Natural killer cell (primary cell): ENCODE measurements at regions of chr3 and their contacts with region 1.

Region 1: GRCh38 chr3:191388823-191389222 is 58.5 kb upstream of the UTS2B start:
- DNase-seq: no peak
- ATAC-seq: no peak
- H3K4me3 ChIP-seq: no peak overlapping the region
- H3K4me3 Mint-ChIP-seq: no peak overlapping the region
- H3K27ac ChIP-seq: no peak overlapping the region
- H3K27ac Mint-ChIP-seq: no peak overlapping the region
- H3K4me1 ChIP-seq: no peaks in the 10 kb centered on the region
- H3K4me1 Mint-ChIP-seq: no peaks in the 10 kb centered on the region
- H3K27me3 ChIP-seq: no peaks in the 10 kb centered on the region
- H3K27me3 Mint-ChIP-seq: no peaks in the 10 kb centered on the region
- CTCF ChIP-seq: no peak

Region 2: GRCh38 chr3:190614226-190615059 is 774.4 kb before region 1 on chr3:
- intact Hi-C with region 1: no loop called
- DNase-seq: no peak
- ATAC-seq: no peak
- H3K4me3 ChIP-seq: no peak overlapping the region
- H3K4me3 Mint-ChIP-seq: no peak overlapping the region
- H3K27ac ChIP-seq: no peak overlapping the region
- H3K27ac Mint-ChIP-seq: no peak overlapping the region
- H3K4me1 ChIP-seq: peaks cover 2% of the 10 kb centered on the region
- H3K4me1 Mint-ChIP-seq: peaks cover 0 to 10% of the 10 kb centered on the region in 2 donors
- H3K27me3 ChIP-seq: no peaks in the 10 kb centered on the region
- H3K27me3 Mint-ChIP-seq: no peaks in the 10 kb centered on the region
- CTCF ChIP-seq: no peak

Region 3: GRCh38 chr3:191119415-191120295 is 269.2 kb before region 1 on chr3:
- intact Hi-C with region 1: no loop called
- DNase-seq: no peak
- ATAC-seq: no peak
- H3K4me3 ChIP-seq: no peak overlapping the region
- H3K4me3 Mint-ChIP-seq: no peak overlapping the region
- H3K27ac ChIP-seq: no peak overlapping the region
- H3K27ac Mint-ChIP-seq: no peak overlapping the region
- H3K4me1 ChIP-seq: no peaks in the 10 kb centered on the region
- H3K4me1 Mint-ChIP-seq: no peaks in the 10 kb centered on the region
- H3K27me3 ChIP-seq: no peaks in the 10 kb centered on the region
- H3K27me3 Mint-ChIP-seq: no peaks in the 10 kb centered on the region
- CTCF ChIP-seq: no peak

Region 4: DNA sequence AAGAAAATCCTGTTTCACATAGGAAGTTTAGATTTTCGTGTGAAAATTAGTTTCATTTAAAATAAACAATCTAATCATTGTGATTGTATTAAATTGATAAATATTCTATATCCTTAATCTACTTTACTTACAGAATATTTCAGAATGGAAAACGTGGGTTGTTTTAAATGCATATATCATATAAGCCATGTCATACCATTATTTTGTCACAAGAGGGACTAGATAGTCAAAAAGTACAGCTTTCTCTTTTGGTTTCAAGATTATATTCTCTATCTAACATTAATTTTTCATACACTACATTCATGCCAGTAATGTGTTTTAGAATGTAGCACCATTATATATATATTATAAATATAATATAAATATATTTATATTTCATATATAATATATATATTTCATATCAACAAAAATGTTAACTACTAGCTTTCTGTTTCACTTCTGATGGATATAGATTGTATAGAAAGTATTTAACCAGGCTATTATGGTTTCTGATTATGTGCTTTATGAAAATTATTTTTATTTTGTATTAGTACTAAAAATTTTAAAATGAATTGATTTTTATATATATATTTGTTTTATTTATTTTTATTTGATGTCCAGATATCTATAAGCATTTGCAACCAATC is 144.5 kb before region 1 on chr3:
- intact Hi-C with region 1: loop called (anchors 5 kb)
- DNase-seq: peak in 1 of 2 donors; percentile 9
- ATAC-seq: peak; percentile 46 to 57 (median 52)
- H3K4me3 ChIP-seq: no peak overlapping the region
- H3K4me3 Mint-ChIP-seq: no peak overlapping the region
- H3K27ac ChIP-seq: no peak overlapping the region
- H3K27ac Mint-ChIP-seq: no peak overlapping the region
- H3K4me1 ChIP-seq: no peaks in the 10 kb centered on the region
- H3K4me1 Mint-ChIP-seq: no peaks in the 10 kb centered on the region
- H3K27me3 ChIP-seq: no peaks in the 10 kb centered on the region
- H3K27me3 Mint-ChIP-seq: no peaks in the 10 kb centered on the region
- CTCF ChIP-seq: peak; percentile 50

Region 5: DNA sequence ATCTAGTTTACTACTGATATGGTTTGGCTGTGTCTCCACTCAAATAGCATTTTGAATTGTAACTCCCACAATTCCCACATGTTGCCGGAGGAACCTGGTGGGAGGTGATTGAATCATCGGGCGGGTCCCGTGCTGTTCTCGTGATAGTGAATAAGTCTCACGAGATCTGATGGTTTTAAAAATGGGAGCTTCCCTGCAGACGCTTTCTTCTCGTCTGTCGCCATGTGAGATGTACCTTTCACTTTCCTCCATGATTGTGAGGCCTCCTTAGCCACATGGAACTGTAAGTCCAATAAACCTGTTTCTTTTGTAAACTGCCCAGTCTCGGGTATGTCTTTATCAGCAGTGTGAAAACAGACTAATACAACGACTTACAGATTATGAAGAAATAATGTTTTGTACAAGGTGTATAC is 36.5 kb after region 1 on chr3:
- intact Hi-C with region 1: no loop called
- DNase-seq: no peak
- ATAC-seq: no peak
- H3K4me3 ChIP-seq: no peak overlapping the region
- H3K4me3 Mint-ChIP-seq: no peak overlapping the region
- H3K27ac ChIP-seq: no peak overlapping the region
- H3K27ac Mint-ChIP-seq: no peak overlapping the region
- H3K4me1 ChIP-seq: no peaks in the 10 kb centered on the region
- H3K4me1 Mint-ChIP-seq: no peaks in the 10 kb centered on the region
- H3K27me3 ChIP-seq: no peaks in the 10 kb centered on the region
- H3K27me3 Mint-ChIP-seq: no peaks in the 10 kb centered on the region
- CTCF ChIP-seq: no peak